SK-N-SH (cell line): ENCODE measurements at regions of chr5 and their contacts with region 1.

Region 1: GRCh38 chr5:172293054-172293744 is 9.6 kb upstream of the UBTD2 start:
- DNase-seq: peak; percentile 76
- H3K4me3 ChIP-seq: peak overlapping the region in 1 of 2 experiments; percentile 3; a peak in 1 of 4 replicates
- H3K27ac ChIP-seq: no peak overlapping the region
- H3K4me1 ChIP-seq: peaks cover 0 to 4% of the 10 kb centered on the region in 2 experiments; a peak in 1 of 4 replicates
- H3K27me3 ChIP-seq: no peaks in the 10 kb centered on the region
- CTCF ChIP-seq: peak; percentile 93
- EP300 ChIP-seq: no peak
- RAD21 ChIP-seq: peak; percentile 93

Region 2: GRCh38 chr5:172097356-172097755 is 195.8 kb before region 1 on chr5:
- CTCF ChIA-PET with region 1: interaction called, 14 read pairs
- POLR2A ChIA-PET with region 1: no interaction called
- DNase-seq: no peak
- H3K4me3 ChIP-seq: no peak overlapping the region
- H3K27ac ChIP-seq: no peak overlapping the region
- H3K4me1 ChIP-seq: peaks cover 1 to 6% of the 10 kb centered on the region in 2 experiments; a peak in 2 of 4 replicates
- H3K27me3 ChIP-seq: no peaks in the 10 kb centered on the region
- CTCF ChIP-seq: no peak
- EP300 ChIP-seq: no peak
- RAD21 ChIP-seq: no peak

Region 3: DNA sequence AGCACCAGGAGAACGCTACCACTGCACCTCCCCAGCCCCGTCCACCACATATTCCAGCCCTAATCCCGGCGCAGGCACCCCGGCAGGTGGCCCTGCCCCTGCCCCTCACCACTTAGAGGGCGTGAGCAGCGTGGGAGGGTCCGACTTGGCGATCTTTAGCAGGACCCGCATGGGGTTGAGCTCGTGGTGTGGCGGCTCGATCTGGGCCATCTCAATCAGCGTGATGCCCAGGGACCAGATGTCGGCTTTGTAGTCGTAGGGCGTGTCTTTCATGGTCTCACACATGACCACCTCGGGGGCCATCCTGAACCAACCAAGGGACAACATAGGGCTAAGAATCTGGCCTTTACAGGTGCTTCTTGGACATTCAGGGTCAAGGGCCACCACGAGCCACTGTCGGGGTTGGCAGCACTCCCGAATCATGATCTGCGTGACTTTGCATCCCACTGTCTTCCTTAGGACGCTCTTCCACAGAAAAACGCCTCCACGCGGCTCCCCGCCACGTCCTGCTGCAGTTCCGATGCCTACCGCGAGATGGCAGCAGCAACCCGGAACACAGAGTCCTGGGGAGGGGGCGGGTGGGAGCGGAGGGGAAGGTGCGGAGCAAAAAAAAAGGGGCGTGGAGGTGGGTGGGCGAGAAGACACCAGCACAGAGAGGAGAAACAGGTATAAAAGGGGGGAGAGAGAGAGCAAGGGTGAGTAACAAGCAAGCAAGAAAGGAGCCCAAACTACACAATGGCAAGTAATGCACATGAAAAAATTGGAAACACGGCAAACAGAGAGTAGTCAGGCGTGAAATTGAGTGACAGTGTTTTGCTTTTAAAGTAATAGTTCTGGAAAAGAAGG is 186.5 kb before region 1 on chr5:
- CTCF ChIA-PET with region 1: interaction called, 25 read pairs
- POLR2A ChIA-PET with region 1: no interaction called
- DNase-seq: peak; percentile 86
- H3K4me3 ChIP-seq: peak overlapping the region in 1 of 2 experiments; percentile 14; a peak in 3 of 4 replicates
- H3K27ac ChIP-seq: no peak overlapping the region
- H3K4me1 ChIP-seq: peaks cover 14 to 32% of the 10 kb centered on the region in 2 experiments
- H3K27me3 ChIP-seq: no peaks in the 10 kb centered on the region
- CTCF ChIP-seq: peak; percentile 85
- EP300 ChIP-seq: no peak
- RAD21 ChIP-seq: peak; percentile 85

Region 4: GRCh38 chr5:172248637-172249036 is 44.6 kb before region 1 on chr5:
- CTCF ChIA-PET with region 1: no interaction called
- POLR2A ChIA-PET with region 1: no interaction called
- DNase-seq: no peak
- H3K4me3 ChIP-seq: no peak overlapping the region
- H3K27ac ChIP-seq: no peak overlapping the region
- H3K4me1 ChIP-seq: peaks cover 0 to 6% of the 10 kb centered on the region in 2 experiments; a peak in 2 of 4 replicates
- H3K27me3 ChIP-seq: no peaks in the 10 kb centered on the region
- CTCF ChIP-seq: no peak
- EP300 ChIP-seq: no peak
- RAD21 ChIP-seq: no peak

Region 5: GRCh38 chr5:172303572-172304335 is 10.6 kb after region 1 on chr5:
- CTCF ChIA-PET with region 1: interaction called, 12 read pairs
- POLR2A ChIA-PET with region 1: no interaction called
- DNase-seq: no peak
- H3K4me3 ChIP-seq: no peak overlapping the region
- H3K27ac ChIP-seq: no peak overlapping the region
- H3K4me1 ChIP-seq: no peaks in the 10 kb centered on the region
- H3K27me3 ChIP-seq: no peaks in the 10 kb centered on the region
- CTCF ChIP-seq: no peak
- EP300 ChIP-seq: no peak
- RAD21 ChIP-seq: no peak

Region 6: DNA sequence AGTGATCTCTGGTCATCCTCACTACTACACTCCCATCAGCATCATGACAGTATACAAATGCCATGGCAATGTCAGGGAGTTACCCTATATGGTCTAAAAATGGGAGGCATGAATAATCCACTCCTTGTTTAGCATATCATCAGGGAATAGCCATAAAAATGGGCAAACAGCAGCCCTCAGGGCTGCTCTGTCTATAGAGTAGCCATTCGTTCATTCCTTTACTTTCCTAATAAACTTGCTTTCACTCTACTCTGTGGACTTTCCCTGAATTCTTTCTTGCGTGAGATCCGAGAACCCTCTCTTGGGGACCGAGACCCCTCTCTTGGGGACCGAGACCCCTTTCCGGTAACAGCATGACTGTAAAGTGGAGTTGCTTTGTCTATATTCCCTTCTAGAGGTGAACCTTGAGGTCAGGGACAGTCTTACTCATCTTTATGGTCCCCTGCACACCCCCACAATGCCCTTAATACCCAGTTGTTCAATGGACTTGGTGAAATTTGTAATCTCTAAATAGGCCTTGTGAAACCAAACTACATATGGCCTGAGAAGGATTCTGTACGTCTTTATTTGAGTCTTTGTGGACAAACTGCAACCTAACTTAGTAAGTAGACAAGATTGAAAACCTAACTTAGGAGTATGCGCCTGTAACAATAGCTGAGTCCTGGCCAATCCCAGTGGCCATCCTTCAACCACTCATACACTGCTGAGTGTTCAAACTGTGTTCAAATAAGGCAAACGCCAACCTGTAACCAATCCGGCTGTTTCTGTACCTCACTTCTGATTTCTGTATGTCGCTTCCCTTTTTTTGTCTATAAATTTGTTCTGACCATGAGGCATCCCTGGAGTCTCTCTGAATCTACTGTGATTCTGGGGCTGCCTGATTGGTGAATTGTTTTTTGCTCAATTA is 22.6 kb after region 1 on chr5:
- CTCF ChIA-PET with region 1: no interaction called
- POLR2A ChIA-PET with region 1: no interaction called
- DNase-seq: no peak
- H3K4me3 ChIP-seq: no peak overlapping the region
- H3K27ac ChIP-seq: no peak overlapping the region
- H3K4me1 ChIP-seq: no peaks in the 10 kb centered on the region
- H3K27me3 ChIP-seq: no peaks in the 10 kb centered on the region
- CTCF ChIP-seq: no peak
- EP300 ChIP-seq: no peak
- RAD21 ChIP-seq: no peak